Lower lobe of right lung (tissue), 2 donors: ENCODE measurements at regions of chr11 and their contacts with region 1.

Region 1: GRCh38 chr11:122853971-122854446 is 15.7 kb downstream of the CRTAM start:
- DNase-seq: no peak
- ATAC-seq: peak; percentile 46 to 63
- H3K4me3 ChIP-seq: no peak overlapping the region
- H3K27ac ChIP-seq: no peak overlapping the region
- H3K4me1 ChIP-seq: no peaks in the 10 kb centered on the region
- H3K27me3 ChIP-seq: no peaks in the 10 kb centered on the region
- CTCF ChIP-seq: peak; percentile 75

Region 2: DNA sequence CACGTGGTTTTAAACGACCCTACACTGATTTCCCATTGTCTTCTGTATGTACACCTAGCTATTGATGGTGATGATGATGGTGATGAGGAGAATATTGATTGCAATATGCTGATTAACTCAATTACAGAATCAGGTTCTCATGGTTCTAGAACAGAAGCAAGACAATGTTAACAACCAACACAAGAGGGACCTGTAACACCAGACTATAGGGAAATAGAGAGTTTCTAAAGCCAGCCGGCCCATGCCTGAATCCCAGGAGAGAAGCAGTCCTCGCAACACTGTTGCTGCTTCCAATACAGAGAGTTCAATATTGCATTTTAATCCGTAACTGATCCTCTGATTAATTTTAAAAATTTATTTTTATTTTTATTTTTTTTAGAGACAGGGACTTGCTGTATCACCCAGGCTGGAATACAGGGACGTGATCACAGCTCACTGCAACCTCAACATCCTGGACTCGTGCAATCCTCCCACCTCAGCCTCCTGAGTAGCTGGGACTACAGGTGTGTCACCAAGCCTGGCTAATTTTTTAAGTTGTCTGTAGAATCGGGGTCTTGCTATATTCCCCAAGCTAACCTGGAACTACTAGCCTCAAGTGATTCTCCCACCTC is 220.7 kb before region 1 on chr11:
- intact Hi-C with region 1: loop called (anchors 10 kb)
- DNase-seq: no peak
- ATAC-seq: peak; percentile 43 to 63
- H3K4me3 ChIP-seq: no peak overlapping the region
- H3K27ac ChIP-seq: no peak overlapping the region
- H3K4me1 ChIP-seq: no peaks in the 10 kb centered on the region
- H3K27me3 ChIP-seq: no peaks in the 10 kb centered on the region
- CTCF ChIP-seq: peak; percentile 51

Region 3: DNA sequence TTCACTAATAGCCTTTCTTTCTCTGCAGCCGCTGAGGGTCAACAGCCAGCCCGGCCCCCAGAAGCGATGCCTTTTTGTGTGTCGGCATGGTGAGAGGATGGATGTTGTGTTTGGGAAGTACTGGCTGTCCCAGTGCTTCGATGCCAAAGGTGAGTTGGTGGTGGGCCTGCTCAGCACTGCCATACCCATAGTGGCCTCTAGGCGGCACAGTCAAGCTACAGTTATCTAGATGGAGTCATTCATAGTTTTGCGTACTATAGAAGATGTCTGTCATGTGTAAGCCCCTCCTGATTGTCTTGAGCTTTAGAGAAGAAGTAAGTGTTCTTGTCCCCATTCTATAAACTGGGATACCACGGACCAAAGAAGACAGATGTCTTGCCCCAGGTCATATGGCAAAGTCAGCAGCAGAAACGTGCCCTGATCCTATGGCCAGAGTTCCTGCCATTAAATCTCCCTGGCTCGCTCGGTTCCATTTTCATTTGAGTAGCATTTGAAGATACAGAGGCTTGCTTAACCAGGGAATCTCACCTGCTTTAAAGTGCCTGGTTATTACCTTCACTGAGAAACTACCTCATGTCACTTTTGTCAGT is 57.8 kb before region 1 on chr11:
- intact Hi-C with region 1: loop called (anchors 10 kb)
- DNase-seq: peak; percentile 60
- ATAC-seq: peak; percentile 76 to 83
- H3K4me3 ChIP-seq: no peak overlapping the region
- H3K27ac ChIP-seq: no peak overlapping the region
- H3K4me1 ChIP-seq: peaks cover 14% of the 10 kb centered on the region
- H3K27me3 ChIP-seq: no peaks in the 10 kb centered on the region
- CTCF ChIP-seq: peak; percentile 90

Region 4: GRCh38 chr11:122938557-122938956 is 84.5 kb after region 1 on chr11:
- intact Hi-C with region 1: no loop called
- DNase-seq: no peak
- ATAC-seq: no peak
- H3K4me3 ChIP-seq: no peak overlapping the region
- H3K27ac ChIP-seq: no peak overlapping the region
- H3K4me1 ChIP-seq: no peaks in the 10 kb centered on the region
- H3K27me3 ChIP-seq: no peaks in the 10 kb centered on the region
- CTCF ChIP-seq: no peak

Region 5: GRCh38 chr11:122998727-122999366 is 144.8 kb after region 1 on chr11:
- intact Hi-C with region 1: no loop called
- DNase-seq: no peak
- ATAC-seq: no peak
- H3K4me3 ChIP-seq: no peak overlapping the region
- H3K27ac ChIP-seq: no peak overlapping the region
- H3K4me1 ChIP-seq: no peaks in the 10 kb centered on the region
- H3K27me3 ChIP-seq: peaks cover 26% of the 10 kb centered on the region
- CTCF ChIP-seq: no peak